T-cell (primary cell): ENCODE measurements at regions of chr4 and their contacts with region 1.

Region 1: GRCh38 chr4:163554870-163555465 is 60.5 kb downstream of the TMA16 start:
- DNase-seq: peak in 1 of 35 experiments; percentile 53
- ATAC-seq: no peak
- H3K4me3 ChIP-seq: no peak overlapping the region
- H3K4me3 Mint-ChIP-seq: no peak overlapping the region
- H3K27ac ChIP-seq: no peak overlapping the region
- H3K27ac Mint-ChIP-seq: no peak overlapping the region
- H3K4me1 ChIP-seq: peaks cover 10 to 16% of the 10 kb centered on the region in 2 experiments
- H3K4me1 Mint-ChIP-seq: peaks cover 30 to 44% (median 35%) of the 10 kb centered on the region in 3 donors
- H3K27me3 ChIP-seq: no peaks in the 10 kb centered on the region
- H3K27me3 Mint-ChIP-seq: no peaks in the 10 kb centered on the region

Region 2: GRCh38 chr4:163544407-163545038 is 10.4 kb before region 1 on chr4:
- CTCF ChIA-PET with region 1: interaction called, 11 read pairs
- POLR2A ChIA-PET with region 1: no interaction called
- DNase-seq: peak in 34 of 35 experiments; percentile 17 to 79 (median 44)
- ATAC-seq: peak; percentile 84 to 91 (median 86)
- H3K4me3 ChIP-seq: peak overlapping the region; percentile 36 to 46
- H3K4me3 Mint-ChIP-seq: no peak overlapping the region
- H3K27ac ChIP-seq: peak overlapping the region; percentile 24
- H3K27ac Mint-ChIP-seq: no peak overlapping the region
- H3K4me1 ChIP-seq: peaks cover 0 to 3% of the 10 kb centered on the region in 2 experiments
- H3K4me1 Mint-ChIP-seq: peaks cover 0 to 11% (median 11%) of the 10 kb centered on the region in 3 donors
- H3K27me3 ChIP-seq: no peaks in the 10 kb centered on the region
- H3K27me3 Mint-ChIP-seq: no peaks in the 10 kb centered on the region

Region 3: GRCh38 chr4:163611784-163612445 is 56.9 kb after region 1 on chr4:
- CTCF ChIA-PET with region 1: no interaction called
- POLR2A ChIA-PET with region 1: no interaction called
- DNase-seq: no peak
- ATAC-seq: no peak
- H3K4me3 ChIP-seq: no peak overlapping the region
- H3K4me3 Mint-ChIP-seq: peak overlapping the region in 1 of 3 donors; percentile 46
- H3K27ac ChIP-seq: no peak overlapping the region
- H3K27ac Mint-ChIP-seq: peak overlapping the region in 1 of 2 donors; percentile 47
- H3K4me1 ChIP-seq: no peaks in the 10 kb centered on the region
- H3K4me1 Mint-ChIP-seq: peaks cover 3 to 22% (median 13%) of the 10 kb centered on the region in 3 donors
- H3K27me3 ChIP-seq: no peaks in the 10 kb centered on the region
- H3K27me3 Mint-ChIP-seq: peaks cover 6 to 16% of the 10 kb centered on the region in 2 donors

Region 4: DNA sequence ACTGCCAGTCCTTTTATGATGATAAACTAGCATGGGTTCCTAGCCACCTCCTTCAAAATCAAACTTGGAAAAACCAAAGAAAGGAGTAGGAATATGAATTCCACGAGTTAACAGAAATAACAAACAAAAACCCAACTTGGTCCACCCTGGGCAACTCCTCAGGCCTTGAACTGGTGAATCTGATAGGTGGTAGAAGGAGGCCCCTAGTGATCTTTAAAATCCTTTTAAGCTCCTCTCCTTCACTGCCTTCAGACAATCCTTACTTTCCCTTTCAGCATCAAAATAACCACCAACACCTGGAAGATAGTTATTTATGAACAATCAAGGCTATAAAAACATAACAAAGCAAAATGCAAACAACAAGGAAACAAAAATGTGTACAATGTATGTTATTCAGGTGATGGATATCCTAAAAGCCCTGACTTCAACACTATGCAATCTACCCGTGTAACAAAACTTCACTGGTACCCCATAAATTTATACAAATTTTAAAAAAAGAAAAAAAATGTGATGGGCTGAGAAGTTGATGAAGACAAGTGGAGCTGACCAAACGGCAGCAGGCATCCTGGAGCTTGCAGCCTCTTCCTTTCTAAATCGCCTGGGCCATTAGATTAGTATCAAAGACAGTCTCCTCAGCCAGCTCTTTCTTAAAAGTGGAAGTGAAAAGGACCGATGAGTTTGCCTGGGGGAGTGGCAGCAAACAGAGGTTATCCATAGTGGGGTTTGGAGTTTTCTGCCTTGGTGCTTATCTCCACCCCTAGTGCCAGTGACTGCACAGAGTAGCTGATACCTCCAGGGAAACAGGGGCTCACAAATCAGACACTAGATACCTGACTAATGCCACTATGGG is 119.1 kb after region 1 on chr4:
- CTCF ChIA-PET with region 1: interaction called, 14 to 78 read pairs
- POLR2A ChIA-PET with region 1: no interaction called
- DNase-seq: no peak
- ATAC-seq: no peak
- H3K4me3 ChIP-seq: no peak overlapping the region
- H3K4me3 Mint-ChIP-seq: no peak overlapping the region
- H3K27ac ChIP-seq: no peak overlapping the region
- H3K27ac Mint-ChIP-seq: peak overlapping the region in 1 of 2 donors; percentile 6
- H3K4me1 ChIP-seq: no peaks in the 10 kb centered on the region
- H3K4me1 Mint-ChIP-seq: peaks cover 16 to 27% (median 26%) of the 10 kb centered on the region in 3 donors
- H3K27me3 ChIP-seq: no peaks in the 10 kb centered on the region
- H3K27me3 Mint-ChIP-seq: peaks cover 2 to 4% of the 10 kb centered on the region in 2 donors

Region 5: DNA sequence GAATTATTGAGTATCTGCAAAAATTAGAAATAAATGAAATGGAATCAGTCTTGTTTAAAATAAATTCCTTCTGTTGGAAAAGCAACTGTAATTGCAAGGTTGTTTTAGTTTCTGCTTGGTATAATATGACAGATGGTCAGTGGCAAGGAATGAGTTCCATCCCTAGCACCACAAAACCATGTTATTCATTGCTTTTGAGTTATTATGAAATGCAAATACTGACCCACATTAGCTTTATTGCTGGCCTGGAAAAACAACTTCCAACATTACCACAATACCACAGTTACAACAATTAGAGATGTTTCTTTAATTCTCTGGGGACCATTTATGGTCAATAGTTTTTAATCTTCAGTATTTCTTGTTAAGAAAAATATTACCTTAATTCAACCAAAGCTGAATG is 133.9 kb after region 1 on chr4:
- CTCF ChIA-PET with region 1: interaction called, 4 to 12 read pairs
- POLR2A ChIA-PET with region 1: no interaction called
- DNase-seq: no peak
- ATAC-seq: no peak
- H3K4me3 ChIP-seq: no peak overlapping the region
- H3K4me3 Mint-ChIP-seq: no peak overlapping the region
- H3K27ac ChIP-seq: no peak overlapping the region
- H3K27ac Mint-ChIP-seq: no peak overlapping the region
- H3K4me1 ChIP-seq: no peaks in the 10 kb centered on the region
- H3K4me1 Mint-ChIP-seq: no peaks in the 10 kb centered on the region
- H3K27me3 ChIP-seq: no peaks in the 10 kb centered on the region
- H3K27me3 Mint-ChIP-seq: peaks cover 4 to 12% of the 10 kb centered on the region in 2 donors

Region 6: DNA sequence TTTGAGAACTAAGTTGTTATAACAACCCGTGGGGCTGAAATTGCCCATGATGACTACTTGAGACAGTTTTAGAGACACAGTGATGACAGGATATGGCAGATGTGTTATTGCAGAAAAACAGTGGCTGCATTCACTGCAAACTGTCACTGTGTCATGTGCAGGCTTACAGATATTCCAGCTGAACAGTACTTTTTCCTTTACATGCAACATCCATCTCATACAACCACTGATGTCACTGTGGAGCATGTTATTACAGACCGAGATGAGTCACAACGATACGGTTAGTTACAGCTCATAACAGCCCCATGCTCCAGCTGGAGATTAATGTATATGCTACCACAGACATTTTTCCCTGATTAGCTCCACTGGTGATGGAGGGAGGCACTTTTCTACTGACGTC is 146.9 kb after region 1 on chr4:
- CTCF ChIA-PET with region 1: no interaction called
- POLR2A ChIA-PET with region 1: no interaction called
- DNase-seq: no peak
- ATAC-seq: no peak
- H3K4me3 ChIP-seq: no peak overlapping the region
- H3K4me3 Mint-ChIP-seq: no peak overlapping the region
- H3K27ac ChIP-seq: no peak overlapping the region
- H3K27ac Mint-ChIP-seq: no peak overlapping the region
- H3K4me1 ChIP-seq: no peaks in the 10 kb centered on the region
- H3K4me1 Mint-ChIP-seq: no peaks in the 10 kb centered on the region
- H3K27me3 ChIP-seq: no peaks in the 10 kb centered on the region
- H3K27me3 Mint-ChIP-seq: peaks cover 5 to 14% of the 10 kb centered on the region in 2 donors

Region 7: DNA sequence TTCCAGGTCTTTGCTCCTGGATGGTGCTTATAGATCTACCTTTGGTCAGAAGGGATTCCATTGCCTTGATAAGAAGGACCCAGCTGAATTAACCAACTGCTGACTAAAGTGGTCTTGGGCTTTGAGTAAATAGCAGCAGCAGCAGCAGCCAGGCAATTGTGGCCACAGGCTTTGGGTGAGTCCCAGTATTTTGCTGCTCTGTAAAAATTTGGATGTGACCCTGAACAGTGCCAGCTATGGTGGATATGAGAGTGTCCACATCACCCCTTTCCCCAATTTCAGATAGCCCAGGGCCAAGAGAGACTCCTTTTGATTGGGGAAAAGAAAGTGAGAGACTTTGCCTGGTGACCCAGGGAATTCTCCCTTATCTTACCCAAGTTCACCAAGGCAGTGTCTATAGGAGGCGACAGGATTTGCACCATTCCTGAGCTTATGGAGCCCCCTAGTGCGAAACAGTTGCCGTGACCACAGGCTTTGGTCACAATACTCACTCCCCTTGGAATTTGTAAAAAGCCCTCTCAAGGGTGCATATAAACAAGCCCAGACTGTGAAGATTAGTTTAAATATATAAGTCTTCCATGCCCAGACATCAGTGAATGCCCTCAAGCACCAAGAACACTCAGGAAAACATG is 457.5 kb after region 1 on chr4:
- CTCF ChIA-PET with region 1: interaction called, 3 to 21 read pairs
- POLR2A ChIA-PET with region 1: interaction called in 1 of 2 experiments, 8 read pairs
- DNase-seq: peak in 16 of 35 experiments; percentile 0 to 60 (median 5)
- ATAC-seq: peak in 3 of 4 experiments; percentile 32 to 61 (median 43)
- H3K4me3 ChIP-seq: no peak overlapping the region
- H3K4me3 Mint-ChIP-seq: no peak overlapping the region
- H3K27ac ChIP-seq: no peak overlapping the region
- H3K27ac Mint-ChIP-seq: no peak overlapping the region
- H3K4me1 ChIP-seq: peaks cover 0 to 10% of the 10 kb centered on the region in 2 experiments
- H3K4me1 Mint-ChIP-seq: peaks cover 0 to 24% (median 4%) of the 10 kb centered on the region in 3 donors
- H3K27me3 ChIP-seq: no peaks in the 10 kb centered on the region
- H3K27me3 Mint-ChIP-seq: no peaks in the 10 kb centered on the region